Posterior vena cava (tissue), 2 donors: ENCODE measurements at regions of chr16 and their contacts with region 1.

Region 1: DNA sequence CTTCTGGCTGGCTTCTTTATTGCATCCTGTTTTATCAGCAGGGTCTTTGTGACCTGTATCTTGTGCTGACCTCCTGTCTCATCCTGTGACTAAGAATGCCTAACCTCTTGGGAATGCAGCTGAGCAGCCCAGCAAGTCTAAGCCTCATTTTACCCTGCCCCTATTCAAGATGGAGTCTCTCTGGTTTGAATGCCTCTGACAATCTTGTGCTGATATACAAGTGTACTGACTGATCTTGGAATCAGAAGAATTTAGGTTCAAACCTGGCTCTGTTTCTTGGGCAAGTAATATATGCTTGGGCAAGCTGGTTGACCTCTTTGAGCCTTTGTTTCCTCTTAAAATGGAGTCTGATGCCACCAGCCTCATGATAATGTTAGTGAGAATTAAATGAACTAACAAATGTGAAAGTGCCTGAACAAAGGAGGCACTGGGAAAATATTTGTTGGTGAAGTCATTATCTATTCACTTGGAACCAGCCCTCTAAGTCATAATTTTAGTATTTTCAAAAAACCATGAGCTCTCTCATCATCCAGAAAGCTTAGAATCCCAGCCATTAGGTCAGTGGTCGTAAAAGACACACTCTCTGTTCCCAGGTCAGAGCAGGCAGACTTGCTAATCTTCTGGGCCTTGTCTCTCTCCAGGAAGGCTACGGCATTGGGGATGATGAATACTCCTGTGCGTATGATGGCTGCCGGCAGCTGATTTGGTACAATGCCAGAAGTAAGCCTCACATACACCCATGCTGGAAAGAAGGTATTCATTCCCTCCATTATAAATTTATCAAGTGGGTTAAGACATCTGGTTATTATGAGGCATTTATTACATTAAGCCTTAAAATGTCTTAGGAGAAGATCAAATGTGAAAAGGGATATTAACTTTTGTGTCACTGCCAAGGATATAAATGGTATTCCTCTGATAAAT is 18.1 kb upstream of the ARL2BP start:
- DNase-seq: no peak

Region 2: DNA sequence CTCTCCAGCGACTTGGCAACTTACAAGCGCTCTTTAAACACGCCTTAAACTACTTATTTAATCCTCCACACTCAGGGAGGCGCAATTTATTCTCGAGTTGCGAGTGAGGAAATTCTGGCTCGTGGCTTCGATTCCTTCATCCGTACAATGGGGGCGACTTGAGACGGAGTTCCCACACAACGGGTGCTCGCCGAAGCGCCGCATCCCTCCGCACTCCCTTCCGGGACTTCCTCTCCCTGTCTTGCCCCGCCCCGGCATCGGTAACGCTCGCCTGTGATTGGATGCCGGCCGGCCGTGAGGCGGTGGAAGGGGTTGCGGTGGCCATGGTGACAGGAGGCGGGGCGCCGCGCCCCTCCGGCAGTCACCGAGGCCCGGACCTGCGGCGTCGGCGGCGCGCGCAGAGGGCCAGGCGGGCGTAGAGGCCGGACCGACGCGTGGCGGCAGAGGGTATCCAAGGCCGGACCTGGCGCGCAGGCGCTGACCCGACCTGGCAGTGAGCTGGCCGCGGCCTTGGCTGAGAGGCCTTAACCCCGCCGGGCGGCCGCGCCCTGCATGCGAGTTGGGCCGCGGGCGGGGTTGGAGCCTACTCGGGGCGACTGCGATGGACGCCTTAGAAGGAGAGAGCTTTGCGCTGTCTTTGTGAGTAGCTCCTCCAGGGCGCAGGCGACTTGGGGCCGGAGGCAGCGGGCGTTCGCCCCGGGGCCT is 18.0 kb after region 1 on chr16 and contains the start of gene ARL2BP:
- intact Hi-C with region 1: no loop called
- DNase-seq: peak; percentile 100
- total RNA-seq, gene ARL2BP: 48.4 to 49.6 TPM

Region 3: DNA sequence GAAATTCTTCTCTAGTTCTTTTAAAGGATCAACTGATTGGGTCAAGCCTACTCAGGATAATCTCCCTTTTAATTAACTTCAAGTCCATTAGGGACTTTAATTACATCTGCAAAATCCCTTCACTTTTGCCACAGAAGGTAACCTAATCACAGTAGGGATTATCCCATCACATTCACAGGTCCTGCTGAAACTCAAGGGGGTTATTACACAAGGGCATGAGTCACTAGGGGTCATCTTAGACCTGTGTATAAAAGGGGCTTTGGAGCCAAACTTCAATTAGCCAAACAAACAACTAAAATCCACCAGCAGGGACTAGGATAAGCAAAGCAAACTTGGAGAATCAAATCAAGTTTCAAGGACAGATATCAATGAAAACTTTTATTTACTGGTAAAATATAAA is 200.9 kb after region 1 on chr16:
- intact Hi-C with region 1: loop called in 1 of 2 experiments (anchors 2 kb)
- DNase-seq: no peak

Region 4: GRCh38 chr16:57535680-57536305 is 308.8 kb after region 1 on chr16:
- intact Hi-C with region 1: no loop called
- DNase-seq: peak; percentile 98